Activated CD4-positive, alpha-beta memory T cell treated with anti-CD3 and anti-CD28 coated beads, Interleukin-2, amount 10 ng/mL, durations not matched to agents 7 days and 5 days (primary cell): ENCODE measurements at regions of chr1 and their contacts with region 1.

Region 1: GRCh38 chr1:214328770-214329469 is 48.0 kb downstream of the SMYD2 start:
- DNase-seq: peak; percentile 84
- H3K4me3 Mint-ChIP-seq: no peak overlapping the region
- H3K27ac Mint-ChIP-seq: no peak overlapping the region
- H3K4me1 Mint-ChIP-seq: peaks cover 16% of the 10 kb centered on the region
- H3K27me3 Mint-ChIP-seq: no peaks in the 10 kb centered on the region

Region 2: GRCh38 chr1:214271174-214271858 is 57.6 kb before region 1 on chr1:
- CTCF ChIA-PET with region 1: interaction called, 57 read pairs
- POLR2A ChIA-PET with region 1: no interaction called
- DNase-seq: no peak
- H3K4me3 Mint-ChIP-seq: no peak overlapping the region
- H3K27ac Mint-ChIP-seq: no peak overlapping the region
- H3K4me1 Mint-ChIP-seq: peaks cover 3% of the 10 kb centered on the region
- H3K27me3 Mint-ChIP-seq: peaks cover 37% of the 10 kb centered on the region

Region 3: GRCh38 chr1:214310777-214311690 is 17.9 kb before region 1 on chr1:
- CTCF ChIA-PET with region 1: interaction called, 50 read pairs
- POLR2A ChIA-PET with region 1: no interaction called
- DNase-seq: no peak
- H3K4me3 Mint-ChIP-seq: peak overlapping the region; percentile 69
- H3K27ac Mint-ChIP-seq: no peak overlapping the region
- H3K4me1 Mint-ChIP-seq: peaks cover 24% of the 10 kb centered on the region
- H3K27me3 Mint-ChIP-seq: no peaks in the 10 kb centered on the region

Region 4: DNA sequence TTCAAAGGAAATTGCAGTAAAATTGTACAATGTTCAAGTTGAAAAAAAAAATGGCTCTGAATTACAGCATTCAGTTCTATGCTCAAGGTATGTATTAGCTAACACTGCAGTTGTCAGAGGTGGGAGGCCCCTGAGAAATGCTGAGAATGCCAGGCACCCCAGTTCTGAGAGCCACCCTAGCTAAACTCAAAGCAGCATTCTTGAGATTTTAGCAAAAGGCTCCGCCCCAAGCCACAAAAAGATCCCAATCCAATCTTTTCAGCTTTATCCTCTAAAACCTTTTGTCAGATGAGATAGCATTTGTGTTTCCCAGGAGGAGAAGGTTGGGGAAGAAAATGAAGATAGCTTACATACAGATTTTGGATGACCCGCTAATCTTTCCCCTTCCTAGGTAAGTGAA is 20.9 kb after region 1 on chr1:
- CTCF ChIA-PET with region 1: interaction called, 30 read pairs
- POLR2A ChIA-PET with region 1: no interaction called
- DNase-seq: no peak
- H3K4me3 Mint-ChIP-seq: no peak overlapping the region
- H3K27ac Mint-ChIP-seq: no peak overlapping the region
- H3K4me1 Mint-ChIP-seq: no peaks in the 10 kb centered on the region
- H3K27me3 Mint-ChIP-seq: no peaks in the 10 kb centered on the region

Region 5: DNA sequence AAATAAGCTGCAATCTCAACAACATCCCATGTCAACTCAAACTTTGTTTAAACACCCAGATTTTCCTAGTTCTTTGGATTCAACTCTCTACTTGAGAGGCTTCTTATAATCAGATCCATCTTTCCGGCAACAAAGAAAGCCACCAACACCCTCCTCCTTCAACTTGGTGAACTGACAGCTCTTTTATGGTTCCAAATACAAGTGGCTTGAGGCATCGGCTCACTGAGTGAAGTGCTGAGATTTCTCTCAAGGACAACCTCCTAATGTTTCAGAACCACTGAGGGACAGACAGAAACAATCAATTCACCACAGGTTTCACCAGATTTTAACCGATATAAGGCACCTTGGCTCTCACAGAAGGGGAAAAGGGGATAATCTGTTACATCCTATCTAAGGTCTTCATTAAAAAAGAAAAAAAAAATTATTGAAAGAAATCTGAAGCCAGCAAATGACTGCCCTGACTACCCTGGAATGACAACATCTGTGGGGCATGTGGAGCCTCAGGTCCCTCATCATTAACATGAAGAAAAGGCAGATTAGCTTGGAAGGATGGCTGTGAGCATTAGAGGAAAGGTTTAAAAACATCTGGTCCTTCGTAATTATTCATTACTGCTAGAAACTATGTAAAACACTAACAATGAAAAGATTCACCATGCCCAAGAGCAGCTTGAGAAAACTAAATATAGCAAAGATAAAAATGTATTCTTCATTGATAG is 171.6 kb after region 1 on chr1:
- CTCF ChIA-PET with region 1: no interaction called
- POLR2A ChIA-PET with region 1: no interaction called
- DNase-seq: no peak
- H3K4me3 Mint-ChIP-seq: no peak overlapping the region
- H3K27ac Mint-ChIP-seq: no peak overlapping the region
- H3K4me1 Mint-ChIP-seq: no peaks in the 10 kb centered on the region
- H3K27me3 Mint-ChIP-seq: peaks cover 24% of the 10 kb centered on the region

Region 6: DNA sequence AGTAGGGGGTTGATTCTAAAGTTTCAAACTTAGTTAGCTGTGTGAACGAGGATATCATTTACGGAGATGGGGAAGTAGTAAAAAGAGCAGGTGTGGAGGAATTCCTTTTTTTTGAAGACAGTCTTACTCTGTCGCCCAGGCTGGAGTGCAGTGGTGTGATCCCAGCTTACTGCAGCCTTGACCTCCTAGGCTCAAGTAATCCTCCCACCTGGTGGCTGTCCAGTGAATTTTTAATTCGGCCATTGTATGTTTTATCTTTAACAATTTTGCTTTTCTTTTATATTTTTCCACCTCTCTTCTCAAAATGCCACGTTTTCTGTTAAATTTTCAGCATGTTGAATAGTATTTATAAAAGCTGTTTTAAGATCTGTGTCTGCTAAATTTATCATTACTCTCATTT is 261.8 kb after region 1 on chr1:
- CTCF ChIA-PET with region 1: interaction called, 118 read pairs
- POLR2A ChIA-PET with region 1: no interaction called
- DNase-seq: no peak
- H3K4me3 Mint-ChIP-seq: no peak overlapping the region
- H3K27ac Mint-ChIP-seq: no peak overlapping the region
- H3K4me1 Mint-ChIP-seq: no peaks in the 10 kb centered on the region
- H3K27me3 Mint-ChIP-seq: peaks cover 3% of the 10 kb centered on the region